Dorsolateral prefrontal cortex (tissue), 120 donors: ENCODE measurements at regions of chr21 and their contacts with region 1.

Region 1: DNA sequence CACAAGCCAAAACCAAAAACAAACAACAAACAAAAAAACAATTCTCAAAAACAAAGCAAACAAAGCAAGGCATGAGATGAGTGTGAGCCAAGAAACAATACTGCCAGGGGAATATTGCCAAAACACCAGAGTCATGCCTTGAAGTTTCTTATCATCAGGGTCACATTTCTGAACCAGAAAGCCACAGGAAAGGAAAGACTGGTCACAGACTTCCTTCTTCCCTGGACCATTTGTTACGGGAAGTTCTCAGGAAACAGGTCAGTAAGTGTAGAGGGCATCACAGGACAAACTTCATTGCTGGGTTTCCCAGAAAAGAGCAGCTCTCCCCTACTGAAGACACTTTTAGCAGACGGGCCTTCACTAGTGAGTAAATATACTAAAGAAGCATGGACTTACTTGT is 191.2 kb downstream of the GABPA start:
- DNase-seq: no peak
- H3K4me3 ChIP-seq: peak overlapping the region in 1 of 59 donors; percentile 38
- H3K27ac ChIP-seq: peak overlapping the region; percentile 74 to 98 (median 93)
- H3K27me3 ChIP-seq: no peaks in the 10 kb centered on the region
- CTCF ChIP-seq: no peak

Region 2: GRCh38 chr21:25997788-25998611 is 72.1 kb after region 1 on chr21:
- intact Hi-C with region 1: loop called in 1 of 2 experiments (anchors 5 kb)
- DNase-seq: peak in 3 of 10 donors; percentile 12 to 56 (median 34)
- H3K4me3 ChIP-seq: peak overlapping the region in 3 of 59 donors; percentile 11 to 21 (median 20)
- H3K27ac ChIP-seq: peak overlapping the region; percentile 76 to 98 (median 95)
- H3K27me3 ChIP-seq: no peaks in the 10 kb centered on the region
- CTCF ChIP-seq: peak in 4 of 56 donors; percentile 13 to 18 (median 16)